GM10248 (cell line): ENCODE measurements at regions of chr9 and their contacts with region 1.

Region 1: GRCh38 chr9:122912964-122913673 is at the start of gene ZBTB6:
- DNase-seq: peak; percentile 83
- CTCF ChIP-seq: no peak

Region 2: GRCh38 chr9:122020398-122020797 is 892.7 kb before region 1 on chr9:
- CTCF ChIA-PET with region 1: no interaction called
- POLR2A ChIA-PET with region 1: no interaction called
- DNase-seq: no peak
- CTCF ChIP-seq: no peak

Region 3: DNA sequence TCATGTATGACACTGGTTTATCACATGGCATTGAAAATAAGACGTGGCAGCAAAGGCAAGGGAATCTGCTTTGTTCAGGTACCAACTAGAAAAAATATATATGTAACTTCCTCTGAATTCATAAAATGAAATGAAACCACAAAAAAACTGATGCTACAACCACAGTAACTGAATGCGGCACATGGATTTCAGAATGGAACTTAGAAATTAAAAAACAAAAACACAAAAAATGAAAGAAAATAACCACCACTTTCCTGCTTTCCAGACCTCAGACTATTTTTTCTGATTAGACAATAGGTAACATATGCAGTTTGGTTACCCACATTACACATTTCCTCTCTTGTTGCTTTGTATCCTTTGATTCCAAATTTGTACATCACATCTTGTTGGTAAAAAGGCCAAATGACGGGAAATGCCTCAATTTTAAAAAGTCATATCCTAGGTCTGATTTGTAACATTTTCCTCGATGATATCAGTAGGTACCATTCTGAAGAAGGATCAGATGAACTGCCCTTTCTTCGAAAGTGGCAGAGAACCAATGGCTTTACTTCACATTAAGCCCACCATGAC is 66.7 kb before region 1 on chr9:
- CTCF ChIA-PET with region 1: no interaction called
- POLR2A ChIA-PET with region 1: no interaction called
- DNase-seq: no peak
- CTCF ChIP-seq: no peak

Region 4: GRCh38 chr9:122930541-122931225 is 17.6 kb after region 1 on chr9:
- CTCF ChIA-PET with region 1: interaction called, 11 read pairs
- POLR2A ChIA-PET with region 1: interaction called, 4 read pairs
- DNase-seq: no peak
- CTCF ChIP-seq: no peak

Region 5: DNA sequence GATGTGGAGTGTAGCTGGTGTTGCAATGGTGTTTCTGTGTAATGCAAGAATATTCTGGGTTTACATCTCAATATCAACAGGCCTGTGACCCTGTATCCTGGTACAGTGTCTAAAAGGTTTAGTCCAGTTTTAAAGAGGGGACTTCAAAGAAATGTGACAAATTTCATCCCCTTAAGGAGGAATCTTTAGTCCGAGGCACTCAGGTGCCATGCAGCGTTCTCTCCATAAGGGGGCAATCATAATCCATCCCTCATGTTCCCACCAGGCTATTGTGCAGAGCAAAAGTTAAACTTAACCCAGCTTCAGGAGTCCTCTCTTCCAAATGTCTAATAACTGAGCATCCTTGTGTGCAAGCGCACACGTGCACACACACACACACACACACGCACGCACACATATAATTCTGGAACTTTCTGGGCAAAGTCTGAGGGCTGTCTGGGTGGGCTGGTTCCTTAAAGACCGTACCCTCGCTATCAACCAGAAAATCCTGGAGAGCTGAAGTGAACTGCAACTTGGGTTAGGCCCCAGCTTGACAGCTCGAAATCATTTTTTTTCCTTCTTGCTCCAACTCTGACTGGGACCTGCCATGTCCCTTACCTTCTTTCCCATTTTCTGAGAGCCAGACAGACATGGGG is 488.9 kb after region 1 on chr9:
- CTCF ChIA-PET with region 1: no interaction called
- POLR2A ChIA-PET with region 1: no interaction called
- DNase-seq: peak; percentile 66
- CTCF ChIP-seq: peak; percentile 57